Endothelial cell of umbilical vein (primary cell): ENCODE measurements at regions of chr6 and their contacts with region 1.

Region 1: GRCh38 chr6:141562851-141563763 is 569.6 kb upstream of the GJE1 start:
- DNase-seq: peak; percentile 97
- H3K4me3 ChIP-seq: peak overlapping the region in 2 of 3 experiments; percentile 23 to 59
- H3K27ac ChIP-seq: peak overlapping the region; percentile 86
- H3K4me1 ChIP-seq: peaks cover 17% of the 10 kb centered on the region
- H3K27me3 ChIP-seq: no peaks in the 10 kb centered on the region
- CTCF ChIP-seq: peak; percentile 57 to 69
- POLR2A ChIP-seq: no peak

Region 2: GRCh38 chr6:139588076-139588639 is 1974.9 kb before region 1 on chr6:
- CTCF ChIA-PET with region 1: no interaction called
- POLR2A ChIA-PET with region 1: no interaction called
- dilution Hi-C with region 1: no loop called
- intact Hi-C with region 1: loop called (anchors 5 kb)
- DNase-seq: peak; percentile 67
- H3K4me3 ChIP-seq: no peak overlapping the region
- H3K27ac ChIP-seq: peak overlapping the region; percentile 34
- H3K4me1 ChIP-seq: peaks cover 22% of the 10 kb centered on the region
- H3K27me3 ChIP-seq: no peaks in the 10 kb centered on the region
- CTCF ChIP-seq: no peak
- POLR2A ChIP-seq: no peak

Region 3: GRCh38 chr6:139981768-139982181 is 1581.3 kb before region 1 on chr6:
- CTCF ChIA-PET with region 1: no interaction called
- POLR2A ChIA-PET with region 1: no interaction called
- dilution Hi-C with region 1: no loop called
- intact Hi-C with region 1: loop called (anchors 5 kb)
- DNase-seq: peak; percentile 82
- H3K4me3 ChIP-seq: no peak overlapping the region
- H3K27ac ChIP-seq: peak overlapping the region; percentile 13
- H3K4me1 ChIP-seq: peaks cover 15% of the 10 kb centered on the region
- H3K27me3 ChIP-seq: no peaks in the 10 kb centered on the region
- CTCF ChIP-seq: no peak
- POLR2A ChIP-seq: no peak

Region 4: DNA sequence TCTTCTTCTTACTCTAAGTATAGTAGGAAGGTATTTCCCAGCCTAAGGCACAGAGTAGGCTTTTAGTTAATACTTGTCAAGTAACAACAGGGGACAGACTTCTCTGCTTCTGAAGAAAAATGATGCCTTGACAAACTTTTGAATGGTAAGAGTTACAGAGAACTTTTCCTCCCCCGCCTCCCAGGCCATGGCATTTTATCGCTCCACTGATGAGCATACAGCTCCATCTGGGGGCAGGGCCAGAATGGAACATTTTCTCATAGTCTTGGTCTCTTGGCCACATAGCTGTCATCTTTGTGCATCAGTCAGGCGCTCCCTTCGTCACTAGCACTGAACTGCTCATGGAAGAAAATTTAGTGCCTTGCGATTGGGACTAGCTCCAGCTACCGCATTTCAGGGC is 1121.9 kb before region 1 on chr6:
- CTCF ChIA-PET with region 1: no interaction called
- POLR2A ChIA-PET with region 1: no interaction called
- dilution Hi-C with region 1: no loop called
- intact Hi-C with region 1: loop called (anchors 1 kb)
- DNase-seq: peak; percentile 57
- H3K4me3 ChIP-seq: no peak overlapping the region
- H3K27ac ChIP-seq: no peak overlapping the region
- H3K4me1 ChIP-seq: peaks cover 18% of the 10 kb centered on the region
- H3K27me3 ChIP-seq: no peaks in the 10 kb centered on the region
- CTCF ChIP-seq: peak; percentile 27 to 40
- POLR2A ChIP-seq: no peak

Region 5: GRCh38 chr6:140921366-140922226 is 641.5 kb before region 1 on chr6:
- CTCF ChIA-PET with region 1: interaction called, 4 read pairs
- POLR2A ChIA-PET with region 1: no interaction called
- dilution Hi-C with region 1: no loop called
- intact Hi-C with region 1: loop called (anchors 5 kb)
- DNase-seq: peak; percentile 89
- H3K4me3 ChIP-seq: no peak overlapping the region
- H3K27ac ChIP-seq: no peak overlapping the region
- H3K4me1 ChIP-seq: peaks cover 3% of the 10 kb centered on the region
- H3K27me3 ChIP-seq: no peaks in the 10 kb centered on the region
- CTCF ChIP-seq: peak; percentile 58 to 69
- POLR2A ChIP-seq: no peak

Region 6: DNA sequence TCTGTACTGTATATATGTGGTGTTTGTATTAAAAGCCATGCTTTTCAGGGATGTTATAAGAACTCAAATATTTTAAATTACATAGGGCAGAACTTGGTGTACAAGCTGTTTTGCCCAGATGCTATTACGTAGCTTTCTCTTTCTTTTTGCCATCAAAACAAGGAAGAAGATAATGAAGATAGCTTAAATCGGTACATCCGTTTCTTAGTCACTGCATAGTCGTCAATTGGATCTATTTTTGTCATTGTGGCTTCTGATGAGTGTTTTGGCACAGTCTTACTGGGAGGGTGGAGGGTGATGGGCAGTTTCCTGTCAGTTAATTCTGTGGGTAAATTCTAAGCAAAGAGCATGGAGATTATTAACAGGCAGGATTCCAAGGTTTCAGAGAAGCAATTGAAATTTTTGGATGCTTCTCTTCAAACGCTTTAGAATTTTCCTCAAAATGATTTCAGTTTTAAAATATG is 79.5 kb before region 1 on chr6:
- CTCF ChIA-PET with region 1: no interaction called
- POLR2A ChIA-PET with region 1: no interaction called
- dilution Hi-C with region 1: no loop called
- intact Hi-C with region 1: loop called (anchors 1 kb)
- DNase-seq: peak; percentile 80
- H3K4me3 ChIP-seq: peak overlapping the region in 1 of 3 experiments; percentile 30
- H3K27ac ChIP-seq: peak overlapping the region; percentile 25
- H3K4me1 ChIP-seq: peaks cover 14% of the 10 kb centered on the region
- H3K27me3 ChIP-seq: no peaks in the 10 kb centered on the region
- CTCF ChIP-seq: no peak
- POLR2A ChIP-seq: no peak

Region 7: GRCh38 chr6:142271476-142271875 is 708.4 kb after region 1 on chr6:
- CTCF ChIA-PET with region 1: no interaction called
- POLR2A ChIA-PET with region 1: no interaction called
- dilution Hi-C with region 1: no loop called
- intact Hi-C with region 1: no loop called
- DNase-seq: no peak
- H3K4me3 ChIP-seq: no peak overlapping the region
- H3K27ac ChIP-seq: no peak overlapping the region
- H3K4me1 ChIP-seq: no peaks in the 10 kb centered on the region
- H3K27me3 ChIP-seq: no peaks in the 10 kb centered on the region
- CTCF ChIP-seq: no peak
- POLR2A ChIP-seq: no peak